ENCODE measurements at regions of chr5 and their contacts with region 1.

Region 1: DNA sequence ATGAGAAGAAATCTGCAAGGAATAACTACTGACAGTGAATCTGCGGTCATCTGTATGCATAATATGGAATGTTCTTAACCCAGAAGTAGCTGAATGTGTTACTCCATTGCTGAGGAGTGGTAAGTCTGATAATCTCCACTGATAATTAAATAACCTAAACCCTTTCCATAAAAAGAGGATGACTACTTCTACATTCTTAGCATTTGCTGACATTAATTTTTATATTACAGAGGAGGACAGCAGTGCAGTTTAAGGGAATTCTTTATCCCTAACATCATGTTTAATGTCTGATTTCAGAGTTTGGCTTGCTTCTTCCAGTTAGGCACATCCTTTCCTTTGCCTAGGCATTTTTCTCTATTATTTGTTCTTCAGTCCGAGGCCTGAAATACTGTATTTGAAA is 52.2 kb downstream of the CDC42SE2 start:
- DNase-seq: no peak
- ATAC-seq: no peak
- H3K4me3 ChIP-seq: no peak overlapping the region
- H3K4me3 Mint-ChIP-seq: no peak overlapping the region
- H3K27ac ChIP-seq: peak overlapping the region in 1 of 2 experiments; percentile 53
- H3K27ac Mint-ChIP-seq: peak overlapping the region; percentile 39
- H3K4me1 ChIP-seq: peaks cover 48% of the 10 kb centered on the region
- H3K4me1 Mint-ChIP-seq: peaks cover 78% of the 10 kb centered on the region
- H3K27me3 ChIP-seq: no peaks in the 10 kb centered on the region
- H3K27me3 Mint-ChIP-seq: no peaks in the 10 kb centered on the region
- CTCF ChIP-seq: no peak

Region 2: DNA sequence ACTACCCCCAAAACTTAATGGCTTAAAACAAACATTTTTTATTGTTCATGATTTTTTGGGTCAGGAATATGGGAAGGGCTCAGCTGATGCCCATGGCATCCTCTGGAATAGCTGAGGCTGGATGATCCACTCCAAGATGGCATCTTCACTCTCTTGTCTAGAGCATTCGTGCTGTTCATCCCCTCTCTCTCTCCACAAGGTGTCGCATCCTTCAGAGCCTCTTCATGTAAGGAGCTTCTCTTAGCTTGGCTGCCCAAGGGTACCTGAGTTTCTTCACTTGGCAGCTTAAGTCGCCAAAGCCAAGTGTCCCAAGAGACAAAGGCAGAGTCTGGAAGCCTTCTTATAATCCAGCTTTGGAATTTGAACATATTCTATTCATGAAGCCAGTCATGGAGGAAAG is 1117.1 kb before region 1 on chr5:
- CTCF ChIA-PET with region 1: no interaction called
- POLR2A ChIA-PET with region 1: no interaction called
- intact Hi-C with region 1: no loop called
- DNase-seq: peak in 2 of 9 experiments; percentile 7 to 10
- ATAC-seq: no peak
- H3K4me3 ChIP-seq: no peak overlapping the region
- H3K4me3 Mint-ChIP-seq: no peak overlapping the region
- H3K27ac ChIP-seq: no peak overlapping the region
- H3K27ac Mint-ChIP-seq: no peak overlapping the region
- H3K4me1 ChIP-seq: no peaks in the 10 kb centered on the region
- H3K4me1 Mint-ChIP-seq: no peaks in the 10 kb centered on the region
- H3K27me3 ChIP-seq: no peaks in the 10 kb centered on the region
- H3K27me3 Mint-ChIP-seq: peaks cover 11% of the 10 kb centered on the region
- CTCF ChIP-seq: no peak

Region 3: GRCh38 chr5:131281133-131281867 is 34.7 kb before region 1 on chr5:
- CTCF ChIA-PET with region 1: interaction called, 6 read pairs
- POLR2A ChIA-PET with region 1: interaction called, 5 read pairs
- intact Hi-C with region 1: loop called (anchors 2 to 5 kb)
- DNase-seq: peak in 2 of 9 experiments; percentile 83 to 91
- ATAC-seq: peak; percentile 81
- H3K4me3 ChIP-seq: peak overlapping the region; percentile 32 to 47
- H3K4me3 Mint-ChIP-seq: peak overlapping the region; percentile 81
- H3K27ac ChIP-seq: peak overlapping the region; percentile 75 to 86
- H3K27ac Mint-ChIP-seq: peak overlapping the region; percentile 94
- H3K4me1 ChIP-seq: peaks cover 87% of the 10 kb centered on the region
- H3K4me1 Mint-ChIP-seq: peaks cover 78% of the 10 kb centered on the region
- H3K27me3 ChIP-seq: no peaks in the 10 kb centered on the region
- H3K27me3 Mint-ChIP-seq: no peaks in the 10 kb centered on the region
- CTCF ChIP-seq: no peak

Region 4: DNA sequence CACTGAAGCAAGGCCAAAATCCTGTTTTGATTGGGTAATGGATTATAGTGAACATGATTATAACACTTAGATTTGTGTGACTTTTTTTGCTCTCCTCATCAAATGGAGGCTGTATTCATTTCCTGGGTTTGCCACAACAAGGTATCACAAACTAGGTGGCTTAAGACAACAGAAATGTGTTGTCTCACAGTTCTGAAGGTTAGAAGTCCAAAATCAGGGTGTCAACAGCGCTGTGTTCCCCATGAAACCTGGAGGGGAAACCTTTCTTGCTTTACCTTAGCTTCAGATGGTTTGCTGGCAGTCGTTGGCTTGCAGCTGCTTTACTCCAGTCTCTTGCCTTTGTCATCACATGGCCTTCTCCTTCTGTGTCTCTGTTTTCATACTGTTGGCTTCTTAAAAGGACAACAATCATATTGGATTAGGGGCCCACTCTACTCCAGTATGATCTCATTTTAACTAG is 19.8 kb before region 1 on chr5:
- CTCF ChIA-PET with region 1: no interaction called
- POLR2A ChIA-PET with region 1: interaction called, 3 read pairs
- intact Hi-C with region 1: loop called in 1 of 2 experiments (anchors 2 kb)
- DNase-seq: peak in 4 of 9 experiments; percentile 29 to 74 (median 48)
- ATAC-seq: peak; percentile 60
- H3K4me3 ChIP-seq: no peak overlapping the region
- H3K4me3 Mint-ChIP-seq: peak overlapping the region; percentile 64
- H3K27ac ChIP-seq: peak overlapping the region in 1 of 2 experiments; percentile 55
- H3K27ac Mint-ChIP-seq: peak overlapping the region; percentile 84
- H3K4me1 ChIP-seq: peaks cover 81% of the 10 kb centered on the region
- H3K4me1 Mint-ChIP-seq: peaks cover 76% of the 10 kb centered on the region
- H3K27me3 ChIP-seq: no peaks in the 10 kb centered on the region
- H3K27me3 Mint-ChIP-seq: no peaks in the 10 kb centered on the region
- CTCF ChIP-seq: no peak